Thyroid gland (tissue), 4 donors: ENCODE measurements at regions of chr6 and their contacts with region 1.

Region 1: DNA sequence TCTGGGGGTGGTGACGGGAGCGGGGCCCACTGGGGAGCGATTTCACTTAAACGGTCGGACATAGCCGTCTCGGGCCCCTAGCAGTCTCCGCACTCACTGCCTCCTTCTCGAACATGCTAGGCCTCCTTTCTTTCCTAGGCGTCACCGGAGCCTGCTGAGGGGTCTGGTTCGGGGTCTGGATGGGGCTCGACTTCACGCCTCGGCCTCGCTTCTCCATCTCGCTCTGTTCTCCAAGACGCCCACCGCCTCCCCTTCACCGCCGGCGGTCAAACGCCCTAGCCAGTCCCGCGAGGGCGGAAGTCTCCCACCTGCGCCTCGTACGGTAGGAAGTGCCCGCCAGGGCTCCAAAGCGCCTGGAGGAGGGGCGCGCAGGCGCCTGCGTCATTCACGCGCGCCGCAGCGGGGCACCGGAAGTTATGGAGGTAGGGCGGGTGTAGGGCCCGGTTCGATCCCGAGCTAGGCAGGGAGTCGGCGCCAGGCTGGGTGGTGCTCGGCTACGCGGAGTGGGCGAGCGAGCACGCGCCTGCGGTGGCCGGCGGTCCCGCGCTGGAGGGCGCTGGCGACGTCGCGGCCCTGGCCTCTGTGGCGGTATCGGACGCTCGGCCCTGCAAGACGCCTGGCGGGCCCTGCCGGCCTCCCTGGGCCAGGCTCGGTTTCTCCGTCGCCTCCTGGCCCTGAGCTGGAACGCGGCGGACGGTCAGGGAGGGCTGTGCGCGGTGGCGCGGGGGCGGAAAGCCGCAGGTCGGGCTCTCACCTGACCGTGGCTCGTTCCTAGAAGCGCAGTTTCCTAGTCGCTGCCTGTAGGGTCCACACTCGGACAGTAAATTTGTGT is at the starts of genes DYNLT2 and ERMARD:
- DNase-seq: peak; percentile 93 to 94
- H3K4me3 ChIP-seq: peak within 1 kb of the TSS; percentile 62 to 96 (median 81)
- H3K27ac ChIP-seq: peak within 1 kb of the TSS; percentile 86 to 95 (median 90)
- H3K4me1 ChIP-seq: peaks cover 7 to 12% of the 10 kb centered on the region in 2 donors
- H3K27me3 ChIP-seq: no peaks in the 10 kb centered on the region
- CTCF ChIP-seq: peak in 5 of 6 experiments; percentile 6 to 49 (median 35)
- POLR2A ChIP-seq: peak; percentile 17 to 90
- total RNA-seq, gene DYNLT2: 0.50 to 5.5 (median 2.5) TPM
- total RNA-seq, gene ERMARD: 29.4 to 49.8 (median 32.0) TPM

Region 2: GRCh38 chr6:169701954-169702839 is 49.3 kb before region 1 on chr6 and contains the starts of genes C6orf120 and WDR27:
- intact Hi-C with region 1: loop called (anchors 10 kb)
- DNase-seq: peak; percentile 96 to 97
- H3K4me3 ChIP-seq: peak within 1 kb of the TSS; percentile 62 to 83 (median 78)
- H3K27ac ChIP-seq: peak within 1 kb of the TSS; percentile 85 to 93 (median 88)
- H3K4me1 ChIP-seq: peaks cover 14 to 29% of the 10 kb centered on the region in 2 donors
- H3K27me3 ChIP-seq: no peaks in the 10 kb centered on the region
- CTCF ChIP-seq: peak in 1 of 6 experiments; percentile 12
- POLR2A ChIP-seq: peak; percentile 65 to 93
- total RNA-seq, gene C6orf120: 19.8 to 32.1 (median 29.3) TPM
- total RNA-seq, gene WDR27: 48.9 to 74.6 (median 51.8) TPM

Region 3: GRCh38 chr6:170554796-170555137 is 803.3 kb after region 1 on chr6:
- intact Hi-C with region 1: loop called (anchors 5 kb)
- DNase-seq: no peak
- H3K4me3 ChIP-seq: peak overlapping the region; percentile 53 to 93 (median 79)
- H3K27ac ChIP-seq: peak overlapping the region in 1 of 3 donors; percentile 77
- H3K4me1 ChIP-seq: peaks cover 23% of the 10 kb centered on the region in 2 donors
- H3K27me3 ChIP-seq: no peaks in the 10 kb centered on the region
- CTCF ChIP-seq: no peak
- POLR2A ChIP-seq: no peak